Left colon (tissue), 2 donors: ENCODE measurements at regions of chr5 and their contacts with region 1.

Region 1: GRCh38 chr5:14644623-14645237 is 19.8 kb upstream of the OTULIN start:
- DNase-seq: no peak
- ATAC-seq: no peak

Region 2: DNA sequence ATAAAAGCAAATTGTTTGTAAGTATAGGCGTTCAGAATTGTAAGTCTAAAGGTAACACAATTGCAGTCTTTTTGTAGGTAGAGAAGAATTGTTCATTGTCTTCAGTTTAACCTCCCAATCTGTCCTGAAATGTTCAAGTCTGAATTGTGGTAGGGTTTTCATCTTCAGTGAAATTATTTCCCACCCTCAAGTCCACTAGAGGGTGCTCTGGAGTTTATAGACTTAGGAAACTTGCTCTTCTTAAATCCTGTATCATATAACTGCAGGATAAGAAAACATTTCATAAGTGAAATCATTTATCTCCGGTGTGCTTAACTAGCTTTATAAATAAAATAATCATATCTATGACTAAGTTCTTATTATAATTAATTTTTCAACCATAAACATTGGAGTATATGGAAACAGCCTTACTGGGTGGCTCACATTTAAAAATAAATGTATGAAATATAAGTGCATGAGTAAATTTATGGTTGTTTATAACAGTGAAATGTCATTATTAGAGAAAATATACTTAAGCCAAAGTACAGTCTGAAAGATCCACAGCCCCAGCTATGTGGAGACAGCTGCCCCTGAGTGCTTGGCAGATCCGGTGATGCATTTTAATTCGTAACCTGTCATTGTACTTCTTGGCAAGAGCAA is 245.6 kb before region 1 on chr5:
- intact Hi-C with region 1: loop called in 1 of 2 experiments (anchors 10 kb)
- DNase-seq: no peak
- ATAC-seq: peak; percentile 62

Region 3: GRCh38 chr5:14463629-14464028 is 181.1 kb before region 1 on chr5:
- intact Hi-C with region 1: no loop called
- DNase-seq: peak; percentile 35 to 71
- ATAC-seq: peak; percentile 96